Mucosa of descending colon (tissue), 3 donors: ENCODE measurements at regions of chr10 and their contacts with region 1.

Region 1: DNA sequence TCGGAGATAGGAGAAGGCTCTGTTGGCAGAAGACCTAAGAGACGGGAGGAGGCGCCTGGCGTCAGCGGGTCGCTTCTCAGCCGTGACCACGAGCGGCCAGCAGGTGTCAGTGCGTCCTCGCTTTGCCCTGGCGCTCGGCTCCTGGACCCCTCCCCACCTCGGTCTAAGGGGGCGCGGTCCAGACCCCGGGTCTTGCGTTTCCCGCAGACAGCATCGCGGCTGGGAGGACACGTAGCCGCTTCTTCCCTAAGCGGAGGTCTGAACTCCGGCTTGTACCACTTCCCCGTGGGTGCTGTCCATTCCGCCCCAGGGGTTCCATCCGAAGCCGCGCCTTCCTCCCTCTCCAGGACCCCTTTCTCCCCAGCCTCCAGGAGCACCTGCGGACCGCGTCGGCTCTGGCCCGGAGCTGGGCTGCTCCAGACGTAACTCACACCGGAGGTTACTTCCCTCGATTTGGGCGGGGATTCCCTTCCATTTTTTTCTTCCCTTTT is 593 bp upstream of the ADRA2A start:
- DNase-seq: peak; percentile 76 to 84 (median 81)
- ATAC-seq: peak; percentile 81
- H3K4me3 ChIP-seq: peak overlapping the region; percentile 15
- H3K4me1 ChIP-seq: peaks cover 22% of the 10 kb centered on the region
- CTCF ChIP-seq: peak; percentile 65

Region 2: GRCh38 chr10:111207500-111207899 is 131.3 kb after region 1 on chr10:
- intact Hi-C with region 1: loop called in 1 of 2 experiments (anchors 5 kb)
- DNase-seq: peak; percentile 62 to 82 (median 80)
- ATAC-seq: peak; percentile 88
- H3K4me3 ChIP-seq: no peak overlapping the region
- H3K4me1 ChIP-seq: no peaks in the 10 kb centered on the region
- CTCF ChIP-seq: peak; percentile 17

Region 3: GRCh38 chr10:111598436-111599059 is 522.3 kb after region 1 on chr10:
- intact Hi-C with region 1: loop called in 1 of 2 experiments (anchors 5 kb)
- DNase-seq: peak in 1 of 3 donors; percentile 73
- ATAC-seq: peak; percentile 83
- H3K4me3 ChIP-seq: no peak overlapping the region
- H3K4me1 ChIP-seq: no peaks in the 10 kb centered on the region
- CTCF ChIP-seq: peak; percentile 62